Caco-2 (cell line): ENCODE measurements at regions of chr9 and their contacts with region 1.

Region 1: DNA sequence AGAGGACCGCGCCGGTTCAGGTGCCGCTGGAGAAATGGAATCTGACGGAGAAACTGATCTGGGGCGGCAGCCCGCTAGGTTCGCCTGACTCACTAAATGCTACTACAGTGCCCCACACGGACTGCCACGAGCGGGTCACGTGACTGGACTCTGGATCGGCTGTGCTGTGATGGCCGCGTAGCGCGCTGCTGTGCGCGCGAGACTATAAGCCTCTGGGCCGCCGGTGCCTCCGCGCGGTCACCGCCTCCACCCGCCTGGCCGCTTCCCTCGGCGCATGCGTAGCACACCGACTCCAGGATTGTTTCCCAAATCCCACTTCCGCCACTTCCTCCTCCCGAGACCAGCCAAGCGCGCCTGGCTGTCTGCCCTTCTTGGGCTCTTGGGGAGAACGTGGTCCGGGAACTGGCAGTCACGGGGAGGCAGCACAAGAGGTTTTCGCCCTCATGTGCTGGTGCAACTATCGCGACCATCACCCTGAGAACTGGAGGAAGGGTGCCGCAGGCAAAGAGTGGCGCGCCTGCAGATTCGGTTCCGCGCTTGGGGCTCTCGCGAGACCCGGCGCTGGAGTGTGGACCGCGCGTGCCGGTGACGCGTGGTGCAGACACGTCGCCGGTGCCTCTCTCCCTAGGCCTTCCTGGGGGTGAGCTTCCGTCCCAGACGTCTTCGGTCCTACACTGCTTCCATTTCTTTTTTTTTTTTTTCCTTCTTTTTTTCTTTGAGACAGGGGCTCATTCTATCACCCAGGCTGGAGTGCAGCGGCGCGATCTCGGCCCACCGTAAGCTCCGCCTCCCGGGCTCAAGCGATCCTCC is 35.8 kb upstream of the GLDC start:
- DNase-seq: peak; percentile 96 to 97
- H3K4me3 ChIP-seq: peak overlapping the region; percentile 62
- H3K4me3 Mint-ChIP-seq: peak overlapping the region; percentile 77
- H3K27ac Mint-ChIP-seq: peak overlapping the region; percentile 99
- H3K4me1 ChIP-seq: peaks cover 15% of the 10 kb centered on the region
- H3K4me1 Mint-ChIP-seq: peaks cover 10% of the 10 kb centered on the region
- H3K27me3 ChIP-seq: no peaks in the 10 kb centered on the region
- H3K27me3 Mint-ChIP-seq: no peaks in the 10 kb centered on the region
- CTCF ChIP-seq: no peak

Region 2: GRCh38 chr9:6498982-6499381 is 182.4 kb before region 1 on chr9:
- CTCF ChIA-PET with region 1: no interaction called
- POLR2A ChIA-PET with region 1: no interaction called
- intact Hi-C with region 1: loop called (anchors 10 kb)
- DNase-seq: no peak
- H3K4me3 ChIP-seq: no peak overlapping the region
- H3K4me3 Mint-ChIP-seq: no peak overlapping the region
- H3K27ac Mint-ChIP-seq: no peak overlapping the region
- H3K4me1 ChIP-seq: no peaks in the 10 kb centered on the region
- H3K4me1 Mint-ChIP-seq: peaks cover 4% of the 10 kb centered on the region
- H3K27me3 ChIP-seq: no peaks in the 10 kb centered on the region
- H3K27me3 Mint-ChIP-seq: no peaks in the 10 kb centered on the region
- CTCF ChIP-seq: no peak

Region 3: GRCh38 chr9:6616951-6617602 is 64.3 kb before region 1 on chr9:
- CTCF ChIA-PET with region 1: no interaction called
- POLR2A ChIA-PET with region 1: no interaction called
- intact Hi-C with region 1: no loop called
- DNase-seq: no peak
- H3K4me3 ChIP-seq: no peak overlapping the region
- H3K4me3 Mint-ChIP-seq: no peak overlapping the region
- H3K27ac Mint-ChIP-seq: no peak overlapping the region
- H3K4me1 ChIP-seq: no peaks in the 10 kb centered on the region
- H3K4me1 Mint-ChIP-seq: peaks cover 3% of the 10 kb centered on the region
- H3K27me3 ChIP-seq: no peaks in the 10 kb centered on the region
- H3K27me3 Mint-ChIP-seq: no peaks in the 10 kb centered on the region
- CTCF ChIP-seq: no peak

Region 4: DNA sequence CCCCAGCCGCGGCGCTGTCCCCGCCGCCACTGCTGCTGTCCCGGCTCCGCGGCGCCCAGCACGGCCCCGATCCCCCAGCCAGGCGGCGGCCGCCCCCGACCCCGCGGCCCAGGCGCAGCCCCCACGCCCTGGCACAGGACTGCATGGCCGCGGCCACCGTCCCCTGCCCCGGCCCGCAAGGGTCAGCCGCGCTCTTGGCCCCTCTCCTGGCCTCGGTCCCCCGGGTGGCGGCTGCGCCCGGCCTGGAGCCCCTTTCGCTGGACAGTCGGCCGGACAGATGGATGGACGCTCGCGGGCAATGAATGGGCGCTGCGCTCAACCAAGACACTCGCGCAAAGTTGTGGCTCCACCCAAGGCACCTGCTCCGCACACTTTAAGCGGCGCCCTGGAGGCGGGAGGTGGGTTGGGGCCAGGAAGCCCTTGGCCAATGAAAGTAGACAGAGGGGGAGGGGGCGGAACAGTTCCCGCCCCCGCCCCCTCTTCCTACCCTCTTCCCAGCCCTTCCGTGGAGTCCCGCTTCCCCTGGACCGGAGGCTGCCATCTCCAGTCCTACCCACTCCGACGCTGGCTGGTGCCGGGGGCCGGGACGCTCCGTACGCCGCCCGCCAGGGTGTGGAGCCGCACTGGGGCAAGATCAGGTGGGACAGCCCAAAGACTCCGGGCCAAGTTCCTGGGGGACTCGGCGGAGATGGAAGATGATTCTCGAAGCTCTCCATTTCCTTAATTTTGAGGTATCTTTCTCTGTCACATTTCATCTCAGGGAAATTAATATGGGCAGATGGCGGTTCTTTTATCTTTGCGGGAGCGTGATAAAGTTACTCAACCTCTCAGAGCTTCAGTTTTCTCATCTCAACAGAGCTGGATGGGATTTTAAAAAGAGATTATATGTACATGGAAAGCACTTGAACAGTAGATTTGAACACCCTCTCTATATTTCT is 35.7 kb before region 1 on chr9 and contains the start of gene GLDC:
- CTCF ChIA-PET with region 1: no interaction called
- POLR2A ChIA-PET with region 1: interaction called, 3 read pairs
- intact Hi-C with region 1: loop called (anchors 1 kb)
- DNase-seq: peak; percentile 91 to 94
- H3K4me3 ChIP-seq: peak within 1 kb of the TSS; percentile 70
- H3K4me3 Mint-ChIP-seq: peak within 1 kb of the TSS; percentile 92
- H3K27ac Mint-ChIP-seq: peak within 1 kb of the TSS; percentile 88
- H3K4me1 ChIP-seq: peaks cover 31% of the 10 kb centered on the region
- H3K4me1 Mint-ChIP-seq: peaks cover 28% of the 10 kb centered on the region
- H3K27me3 ChIP-seq: no peaks in the 10 kb centered on the region
- H3K27me3 Mint-ChIP-seq: no peaks in the 10 kb centered on the region
- CTCF ChIP-seq: no peak
- total RNA-seq, gene GLDC: 276 and 320 TPM in 2 replicates

Region 5: GRCh38 chr9:6715755-6716643 is 34.6 kb after region 1 on chr9:
- CTCF ChIA-PET with region 1: no interaction called
- POLR2A ChIA-PET with region 1: interaction called, 36 read pairs
- intact Hi-C with region 1: loop called (anchors 1 kb)
- DNase-seq: peak; percentile 93 to 94
- H3K4me3 ChIP-seq: peak overlapping the region; percentile 60
- H3K4me3 Mint-ChIP-seq: peak overlapping the region; percentile 94
- H3K27ac Mint-ChIP-seq: peak overlapping the region; percentile 97
- H3K4me1 ChIP-seq: peaks cover 7% of the 10 kb centered on the region; the same call in 1 of the 2 replicates
- H3K4me1 Mint-ChIP-seq: peaks cover 11% of the 10 kb centered on the region
- H3K27me3 ChIP-seq: no peaks in the 10 kb centered on the region
- H3K27me3 Mint-ChIP-seq: no peaks in the 10 kb centered on the region
- CTCF ChIP-seq: no peak